WTC11 (cell line): ENCODE measurements at regions of chr10 and their contacts with region 1.

Region 1: GRCh38 chr10:6171881-6172695 is 30.6 kb upstream of the PFKFB3 start:
- DNase-seq: no peak
- ATAC-seq: no peak
- H3K4me3 Mint-ChIP-seq: no peak overlapping the region
- H3K27ac Mint-ChIP-seq: peak overlapping the region; percentile 66; the same call in 1 of the 2 replicates
- H3K4me1 Mint-ChIP-seq: peaks cover 36% of the 10 kb centered on the region
- H3K27me3 Mint-ChIP-seq: no peaks in the 10 kb centered on the region
- CTCF ChIP-seq: no peak

Region 2: GRCh38 chr10:6014241-6014761 is 157.8 kb before region 1 on chr10:
- CTCF ChIA-PET with region 1: no interaction called
- POLR2A ChIA-PET with region 1: no interaction called
- DNase-seq: peak; percentile 55
- ATAC-seq: peak; percentile 85
- H3K4me3 Mint-ChIP-seq: no peak overlapping the region
- H3K27ac Mint-ChIP-seq: no peak overlapping the region
- H3K4me1 Mint-ChIP-seq: peaks cover 7% of the 10 kb centered on the region
- H3K27me3 Mint-ChIP-seq: no peaks in the 10 kb centered on the region
- CTCF ChIP-seq: peak; percentile 35; the same call in 1 of the 2 replicates

Region 3: DNA sequence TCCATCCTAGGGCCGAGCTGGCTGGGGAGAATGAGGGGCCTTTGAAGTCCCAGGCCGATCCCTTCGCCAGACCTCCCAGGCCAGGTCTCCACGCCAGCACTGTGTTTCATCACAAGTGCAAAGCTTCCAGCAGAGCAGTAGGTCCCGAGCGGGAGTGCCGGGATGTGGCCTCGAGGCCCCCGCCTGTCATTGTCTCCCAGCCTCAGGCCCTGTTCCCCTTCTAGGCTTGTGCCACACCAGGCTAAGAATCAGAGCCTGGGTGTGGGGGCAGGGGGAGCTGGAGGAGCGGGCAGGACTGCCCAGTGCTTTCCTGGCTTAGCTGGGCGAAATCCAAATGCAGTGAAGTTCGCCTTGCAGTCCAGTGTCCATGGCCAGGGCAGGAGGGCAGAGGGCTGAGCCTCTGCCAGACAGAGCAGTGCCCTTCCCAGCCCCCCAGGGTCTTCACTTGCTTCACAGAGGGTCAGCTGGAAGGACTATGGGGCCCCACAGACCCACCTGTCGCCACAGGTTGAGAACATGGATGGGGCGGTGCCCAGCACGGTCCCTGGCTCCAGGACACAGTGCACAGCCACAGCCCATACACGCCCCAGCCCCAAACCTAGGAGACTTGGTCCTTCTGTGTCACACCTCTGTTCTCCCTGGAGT is 10.5 kb after region 1 on chr10:
- CTCF ChIA-PET with region 1: interaction called, 12 read pairs
- POLR2A ChIA-PET with region 1: no interaction called
- DNase-seq: no peak
- ATAC-seq: peak; percentile 42
- H3K4me3 Mint-ChIP-seq: no peak overlapping the region
- H3K27ac Mint-ChIP-seq: no peak overlapping the region
- H3K4me1 Mint-ChIP-seq: 0 out of 2 replicates have a peak, but pooled peaks cover 4% of the 10 kb centered on the region
- H3K27me3 Mint-ChIP-seq: no peaks in the 10 kb centered on the region
- CTCF ChIP-seq: no peak